HEK293 (cell line): ENCODE measurements at regions of chr9 and their contacts with region 1.

Region 1: GRCh38 chr9:96317335-96317980 is 15.5 kb upstream of the HSD17B3 start:
- H3K4me3 ChIP-seq: no peak overlapping the region
- H3K27ac ChIP-seq: no peak overlapping the region
- H3K4me1 ChIP-seq: no peaks in the 10 kb centered on the region
- CTCF ChIP-seq: peak; percentile 41

Region 2: DNA sequence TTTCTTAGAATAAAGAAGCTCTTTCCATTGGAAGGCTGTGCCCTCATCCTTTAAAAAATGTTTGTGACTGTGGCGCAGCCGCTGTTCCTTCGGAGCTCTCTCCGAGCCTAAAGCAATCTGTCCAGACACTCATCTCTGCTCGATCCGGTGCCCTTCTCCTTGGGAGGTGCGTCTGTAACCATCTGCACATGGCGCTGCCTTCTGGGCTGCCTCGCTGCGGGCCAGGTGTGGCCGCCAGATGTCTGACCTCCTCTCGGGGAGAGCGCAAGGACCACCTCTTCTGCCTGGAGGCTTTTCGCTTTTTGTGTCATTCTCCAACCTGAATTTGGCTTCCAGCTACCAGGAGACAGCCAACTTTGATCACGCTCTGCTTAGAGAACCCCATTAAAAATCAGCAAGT is 647.3 kb before region 1 on chr9:
- CTCF ChIA-PET with region 1: no interaction called
- POLR2A ChIA-PET with region 1: no interaction called
- H3K4me3 ChIP-seq: no peak overlapping the region
- H3K27ac ChIP-seq: no peak overlapping the region
- H3K4me1 ChIP-seq: peaks cover 13% of the 10 kb centered on the region
- CTCF ChIP-seq: no peak

Region 3: GRCh38 chr9:96293498-96294158 is 23.8 kb before region 1 on chr9:
- CTCF ChIA-PET with region 1: interaction called, 13 read pairs
- POLR2A ChIA-PET with region 1: no interaction called
- H3K4me3 ChIP-seq: no peak overlapping the region
- H3K27ac ChIP-seq: no peak overlapping the region
- H3K4me1 ChIP-seq: no peaks in the 10 kb centered on the region
- CTCF ChIP-seq: no peak

Region 4: DNA sequence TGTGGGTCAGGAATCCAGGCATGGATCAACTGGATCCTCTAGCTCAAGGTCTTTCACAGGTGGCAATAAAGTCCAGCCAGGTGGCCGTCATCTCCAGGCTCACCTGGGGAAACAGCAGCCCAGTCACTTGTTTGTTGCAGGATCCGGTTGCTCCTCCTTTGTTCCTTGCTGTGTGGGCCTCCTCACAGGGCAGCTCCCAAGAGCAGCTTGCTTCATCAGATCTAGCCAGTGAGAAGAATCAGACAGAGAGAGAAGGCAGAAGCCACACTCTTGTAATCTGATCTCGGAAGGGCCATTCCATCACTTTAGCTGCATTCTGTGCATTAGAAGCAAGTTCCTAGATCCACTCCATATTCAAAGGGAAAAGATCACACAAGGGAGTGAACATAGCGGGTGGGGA is 12.3 kb before region 1 on chr9:
- CTCF ChIA-PET with region 1: interaction called, 20 read pairs
- POLR2A ChIA-PET with region 1: no interaction called
- H3K4me3 ChIP-seq: no peak overlapping the region
- H3K27ac ChIP-seq: no peak overlapping the region
- H3K4me1 ChIP-seq: no peaks in the 10 kb centered on the region
- CTCF ChIP-seq: no peak